CD8-positive, alpha-beta T cell (primary cell): ENCODE measurements at regions of chr2 and their contacts with region 1.

Region 1: GRCh38 chr2:200811336-200812121 is at the start of gene BZW1:
- DNase-seq: peak; percentile 94 to 98 (median 97)
- ATAC-seq: peak; percentile 82
- H3K4me3 ChIP-seq: peak within 1 kb of the TSS; percentile 69 to 90
- H3K4me3 Mint-ChIP-seq: peak within 1 kb of the TSS; percentile 99
- H3K27ac ChIP-seq: peak within 1 kb of the TSS; percentile 98
- H3K27ac Mint-ChIP-seq: peak within 1 kb of the TSS; percentile 98
- H3K4me1 ChIP-seq: peaks cover 33% of the 10 kb centered on the region
- H3K4me1 Mint-ChIP-seq: peaks cover 48% of the 10 kb centered on the region
- H3K27me3 ChIP-seq: no peaks in the 10 kb centered on the region
- H3K27me3 Mint-ChIP-seq: no peaks in the 10 kb centered on the region
- CTCF ChIP-seq: no peak
- total RNA-seq, gene BZW1: 330 to 338 TPM

Region 2: GRCh38 chr2:199955339-199956261 is 855.9 kb before region 1 on chr2 and contains the starts of genes MAIP1 and TYW5:
- CTCF ChIA-PET with region 1: no interaction called
- POLR2A ChIA-PET with region 1: no interaction called
- intact Hi-C with region 1: loop called (anchors 5 to 10 kb)
- DNase-seq: peak; percentile 60 to 88 (median 78)
- ATAC-seq: peak; percentile 87
- H3K4me3 ChIP-seq: peak within 1 kb of the TSS; percentile 97 to 98
- H3K4me3 Mint-ChIP-seq: peak within 1 kb of the TSS; percentile 97
- H3K27ac ChIP-seq: peak within 1 kb of the TSS; percentile 71 to 87
- H3K27ac Mint-ChIP-seq: peak within 1 kb of the TSS; percentile 91
- H3K4me1 ChIP-seq: peaks cover 34% of the 10 kb centered on the region
- H3K4me1 Mint-ChIP-seq: peaks cover 60% of the 10 kb centered on the region
- H3K27me3 ChIP-seq: no peaks in the 10 kb centered on the region
- H3K27me3 Mint-ChIP-seq: no peaks in the 10 kb centered on the region
- CTCF ChIP-seq: no peak
- total RNA-seq, gene MAIP1: 40.1 to 48.3 TPM
- total RNA-seq, gene TYW5: 20.5 to 22.2 TPM

Region 3: DNA sequence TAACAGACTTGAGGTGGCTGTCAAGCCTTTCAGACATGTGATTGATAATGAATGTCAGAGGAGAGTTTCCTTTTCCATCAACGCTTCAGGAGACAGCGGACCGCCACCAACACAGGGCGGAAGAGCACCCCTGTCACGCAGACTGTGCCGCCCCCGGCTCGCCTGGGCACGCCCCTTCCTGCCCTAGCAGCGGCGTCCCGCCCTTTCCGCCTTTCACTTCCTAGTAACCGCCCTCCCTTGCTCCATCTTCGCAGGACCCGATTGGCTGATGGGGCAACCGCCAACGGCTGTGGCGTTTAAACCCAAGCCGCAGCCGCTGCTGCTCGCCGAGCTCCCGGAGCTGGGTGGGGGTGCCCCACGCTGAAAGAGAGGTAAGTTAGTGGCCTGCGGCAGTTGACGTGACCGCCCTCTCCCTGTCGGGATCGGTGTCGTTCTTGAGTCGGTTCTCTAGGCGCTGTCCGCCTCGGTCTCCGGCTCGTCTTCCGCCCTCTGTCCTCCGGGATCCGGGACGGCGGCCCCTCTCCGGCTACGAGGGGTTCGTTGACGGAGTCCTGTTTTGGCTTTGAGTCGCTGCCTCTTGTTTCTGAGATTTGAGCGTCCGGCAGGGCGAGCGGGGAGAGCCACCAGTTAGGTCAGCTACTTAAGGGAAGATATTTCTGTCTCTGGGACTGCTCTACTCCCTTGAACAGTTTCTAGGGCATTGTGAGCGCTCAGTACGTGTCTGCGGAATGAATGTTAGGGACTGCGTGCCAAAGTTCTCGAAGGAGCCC is 285.5 kb before region 1 on chr2 and contains the start of gene SGO2:
- CTCF ChIA-PET with region 1: no interaction called
- POLR2A ChIA-PET with region 1: interaction called, 3 read pairs
- intact Hi-C with region 1: loop called (anchors 2 kb)
- DNase-seq: peak; percentile 92 to 97 (median 95)
- ATAC-seq: peak; percentile 100
- H3K4me3 ChIP-seq: peak within 1 kb of the TSS; percentile 73 to 84
- H3K4me3 Mint-ChIP-seq: peak within 1 kb of the TSS; percentile 91
- H3K27ac ChIP-seq: peak within 1 kb of the TSS; percentile 18 to 71
- H3K27ac Mint-ChIP-seq: peak within 1 kb of the TSS; percentile 87
- H3K4me1 ChIP-seq: peaks cover 7% of the 10 kb centered on the region
- H3K4me1 Mint-ChIP-seq: peaks cover 10% of the 10 kb centered on the region
- H3K27me3 ChIP-seq: no peaks in the 10 kb centered on the region
- H3K27me3 Mint-ChIP-seq: no peaks in the 10 kb centered on the region
- CTCF ChIP-seq: no peak
- total RNA-seq, gene SGO2: 0.52 to 0.69 TPM

Region 4: DNA sequence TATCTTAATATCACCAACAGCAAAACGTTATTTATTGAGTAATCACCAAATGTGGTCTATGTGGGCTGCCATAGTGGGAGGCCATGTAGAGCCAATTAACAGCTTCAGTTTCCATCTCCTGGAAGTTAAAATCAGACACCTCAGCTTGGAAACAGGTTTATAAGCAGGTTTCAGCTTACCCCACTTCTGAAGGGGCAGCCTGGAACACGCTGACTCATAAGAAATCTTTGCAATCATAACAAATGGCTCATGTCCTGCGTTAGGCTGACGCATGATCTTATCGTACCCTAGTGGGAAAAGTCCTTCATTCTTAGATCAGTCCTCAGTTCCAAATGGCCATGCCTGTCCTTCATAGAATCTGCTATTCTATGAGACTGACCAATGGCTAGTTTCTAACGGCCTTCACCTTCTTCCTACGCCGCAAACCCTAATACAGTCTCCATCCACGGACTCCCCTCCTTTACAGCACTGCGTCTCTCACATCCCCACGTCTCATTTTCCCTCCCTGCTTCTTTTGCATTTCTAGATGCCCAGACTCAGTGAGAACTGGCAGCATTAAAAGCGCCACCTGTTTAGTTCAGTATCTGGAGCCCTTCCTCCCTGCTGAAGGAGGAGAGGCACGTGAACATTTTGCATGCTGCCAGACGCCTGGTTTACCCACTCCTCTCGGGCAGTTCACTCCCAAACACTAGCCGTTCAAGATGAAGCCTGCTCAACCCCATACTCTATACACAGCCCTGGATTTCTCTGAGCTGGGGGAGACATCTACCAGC is 24.0 kb before region 1 on chr2:
- CTCF ChIA-PET with region 1: no interaction called
- POLR2A ChIA-PET with region 1: no interaction called
- intact Hi-C with region 1: no loop called
- DNase-seq: no peak
- ATAC-seq: no peak
- H3K4me3 ChIP-seq: no peak overlapping the region
- H3K4me3 Mint-ChIP-seq: no peak overlapping the region
- H3K27ac ChIP-seq: no peak overlapping the region
- H3K27ac Mint-ChIP-seq: no peak overlapping the region
- H3K4me1 ChIP-seq: no peaks in the 10 kb centered on the region
- H3K4me1 Mint-ChIP-seq: no peaks in the 10 kb centered on the region
- H3K27me3 ChIP-seq: no peaks in the 10 kb centered on the region
- H3K27me3 Mint-ChIP-seq: peaks cover 8% of the 10 kb centered on the region
- CTCF ChIP-seq: no peak

Region 5: DNA sequence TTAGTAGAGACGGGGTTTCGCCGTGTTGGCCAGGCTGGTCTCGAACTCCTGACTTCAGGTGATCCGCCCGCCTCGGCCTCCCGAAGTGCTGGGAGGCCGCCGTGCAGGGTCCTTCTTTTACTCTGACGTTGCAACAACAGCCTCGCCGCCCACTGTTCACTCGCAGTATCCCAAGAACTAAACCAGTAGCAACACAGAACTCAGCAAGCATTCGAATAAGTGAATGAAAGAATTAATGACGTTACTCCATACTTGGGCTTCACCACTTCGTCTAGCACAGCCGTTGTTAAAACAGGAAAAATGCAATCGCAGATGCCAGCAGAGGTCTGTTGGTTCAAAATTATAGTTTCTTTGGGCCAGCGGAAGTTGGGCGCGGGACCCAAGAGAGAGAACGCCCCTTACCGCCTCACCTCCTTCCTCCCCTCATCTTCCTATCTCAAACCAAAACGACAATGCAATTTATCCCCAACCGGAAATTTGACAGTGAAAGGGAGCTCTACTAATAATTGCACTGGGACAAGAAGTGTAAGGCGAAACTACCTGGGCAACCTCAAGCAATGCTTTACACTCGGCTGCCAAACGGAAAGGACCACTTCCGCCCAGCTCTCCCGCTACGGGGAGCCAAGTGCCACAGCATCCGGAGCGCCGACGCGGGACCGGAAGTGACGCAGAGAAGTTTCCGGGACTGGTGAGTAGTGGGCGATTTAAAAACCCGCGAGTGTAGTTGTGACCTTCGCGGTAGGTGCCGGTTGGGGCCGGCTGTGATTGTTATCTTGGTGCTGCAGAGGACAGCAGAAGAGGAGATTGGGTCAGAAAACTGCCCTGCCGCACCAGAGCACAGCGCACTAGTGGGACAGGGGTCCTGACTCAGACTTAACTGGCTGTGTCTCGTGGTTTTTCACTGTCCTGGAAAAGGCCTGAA is 77.4 kb after region 1 on chr2 and contains the starts of genes NIF3L1 and PPIL3:
- CTCF ChIA-PET with region 1: no interaction called
- POLR2A ChIA-PET with region 1: interaction called, 16 read pairs
- intact Hi-C with region 1: loop called (anchors 1 kb)
- DNase-seq: peak; percentile 92 to 99 (median 97)
- ATAC-seq: peak; percentile 70
- H3K4me3 ChIP-seq: peak within 1 kb of the TSS; percentile 77 to 78
- H3K4me3 Mint-ChIP-seq: peak within 1 kb of the TSS; percentile 94
- H3K27ac ChIP-seq: peak within 1 kb of the TSS; percentile 96
- H3K27ac Mint-ChIP-seq: peak within 1 kb of the TSS; percentile 100
- H3K4me1 ChIP-seq: peaks cover 21% of the 10 kb centered on the region
- H3K4me1 Mint-ChIP-seq: peaks cover 55% of the 10 kb centered on the region
- H3K27me3 ChIP-seq: no peaks in the 10 kb centered on the region
- H3K27me3 Mint-ChIP-seq: no peaks in the 10 kb centered on the region
- CTCF ChIP-seq: no peak
- total RNA-seq, gene NIF3L1: 3.8 to 4.9 TPM
- total RNA-seq, gene PPIL3: 48.6 to 51.0 TPM

Region 6: GRCh38 chr2:201257956-201258665 is 446.6 kb after region 1 on chr2:
- CTCF ChIA-PET with region 1: no interaction called
- POLR2A ChIA-PET with region 1: interaction called, 3 read pairs
- intact Hi-C with region 1: loop called in 1 of 2 experiments (anchors 5 kb)
- DNase-seq: peak; percentile 87 to 99 (median 94)
- ATAC-seq: peak; percentile 69
- H3K4me3 ChIP-seq: peak overlapping the region; percentile 45 to 48
- H3K4me3 Mint-ChIP-seq: peak overlapping the region; percentile 89
- H3K27ac ChIP-seq: peak overlapping the region; percentile 85 to 93
- H3K27ac Mint-ChIP-seq: peak overlapping the region; percentile 97
- H3K4me1 ChIP-seq: peaks cover 68% of the 10 kb centered on the region
- H3K4me1 Mint-ChIP-seq: peaks cover 75% of the 10 kb centered on the region
- H3K27me3 ChIP-seq: no peaks in the 10 kb centered on the region
- H3K27me3 Mint-ChIP-seq: no peaks in the 10 kb centered on the region
- CTCF ChIP-seq: no peak